H1 (cell line): ENCODE measurements at regions of chr11 and their contacts with region 1.

Region 1: DNA sequence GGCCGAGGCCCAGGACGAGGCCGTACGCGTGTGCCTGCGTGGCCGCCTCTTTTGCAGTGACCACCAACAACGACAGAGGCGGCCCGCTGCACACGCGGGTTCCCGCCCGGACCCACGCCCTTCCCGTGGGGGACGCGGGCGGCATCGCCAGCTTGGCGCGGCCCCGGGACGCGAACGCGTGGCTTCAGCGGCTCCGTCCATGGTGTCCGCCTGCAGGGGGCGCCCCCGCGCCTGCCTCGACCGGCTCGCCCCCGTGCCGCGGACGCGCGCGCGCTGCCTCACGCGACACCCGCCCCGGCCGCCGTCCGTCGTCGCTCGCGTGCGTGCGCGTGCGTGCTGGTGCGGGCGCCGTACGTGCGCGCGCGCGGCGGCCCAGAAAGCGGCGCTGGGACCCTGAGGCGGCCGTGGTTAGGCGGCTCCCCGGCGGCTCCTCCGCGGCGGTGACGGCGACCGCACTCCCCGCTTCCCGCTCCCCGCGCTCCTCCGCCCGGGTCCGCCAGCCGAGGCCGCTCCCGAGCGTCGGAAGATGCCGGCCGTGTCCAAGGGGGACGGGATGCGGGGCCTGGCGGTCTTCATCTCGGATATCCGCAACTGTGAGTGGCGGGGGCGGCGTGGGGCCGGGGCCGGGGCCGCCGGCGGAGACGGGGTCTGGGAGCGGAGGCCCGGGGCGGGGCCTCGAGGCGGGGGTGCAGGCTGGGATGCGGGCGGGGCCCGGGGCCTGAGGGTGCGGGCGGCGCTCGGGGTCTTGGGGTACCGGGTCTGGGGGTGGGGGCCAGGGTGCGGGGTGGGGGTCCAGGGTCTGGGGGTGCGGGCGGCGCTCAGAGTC is at the start of gene AP2A2:
- DNase-seq: peak; percentile 43 to 93
- H3K4me3 ChIP-seq: peak within 1 kb of the TSS; percentile 60 to 81 (median 79)
- H3K27ac ChIP-seq: no peak within 1 kb of the TSS; the same call in 1 of the 2 replicates
- H3K4me1 ChIP-seq: peaks cover 0 to 7% (median 4%) of the 10 kb centered on the region in 4 experiments; a peak in 4 of 7 replicates
- H3K27me3 ChIP-seq: no peaks in the 10 kb centered on the region
- CTCF ChIP-seq: peak; percentile 64 to 90 (median 73)
- EP300 ChIP-seq: 0 out of 3 replicates have a peak, but pooled peaks of 1 of the 2 experiments have one; percentile 45
- POLR2A ChIP-seq: no peak; a peak in 1 of 3 replicates
- RAD21 ChIP-seq: peak in 1 of 2 experiments; percentile 50; a peak in 1 of 4 replicates
- total RNA-seq, gene AP2A2: 50.0 and 56.3 TPM in 2 replicates

Region 2: DNA sequence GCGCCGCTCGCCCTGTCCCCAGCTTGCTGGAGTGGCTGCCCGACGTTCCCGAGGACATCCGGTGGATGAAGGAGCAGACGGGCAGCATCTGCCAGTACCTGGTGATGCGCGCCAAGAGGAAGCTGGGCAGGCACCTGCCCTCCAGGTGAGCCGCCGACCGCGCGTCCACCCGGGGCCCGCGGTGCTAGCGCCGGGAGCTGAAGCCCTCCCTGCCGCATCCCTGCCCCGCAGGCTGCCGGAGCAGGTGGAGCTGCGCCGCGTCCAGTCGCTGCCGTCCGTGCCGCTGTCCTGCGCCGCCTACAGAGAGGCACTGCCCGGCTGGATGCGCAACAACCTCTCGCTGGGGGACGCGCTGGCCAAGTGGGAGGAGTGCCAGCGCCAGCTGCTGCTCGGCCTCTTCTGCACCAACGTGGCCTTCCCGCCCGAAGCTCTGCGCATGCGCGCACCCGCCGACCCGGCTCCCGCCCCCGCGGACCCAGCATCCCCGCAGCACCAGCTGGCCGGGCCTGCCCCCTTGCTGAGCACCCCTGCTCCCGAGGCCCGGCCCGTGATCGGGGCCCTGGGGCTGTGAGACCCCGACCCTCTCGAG is 101.3 kb before region 1 on chr11:
- CTCF ChIA-PET with region 1: no interaction called
- POLR2A ChIA-PET with region 1: no interaction called
- DNase-seq: no peak
- H3K4me3 ChIP-seq: no peak overlapping the region
- H3K27ac ChIP-seq: no peak overlapping the region
- H3K4me1 ChIP-seq: peaks cover 0 to 27% (median 22%) of the 10 kb centered on the region in 4 experiments; a peak in 6 of 7 replicates
- H3K27me3 ChIP-seq: peaks cover 0 to 17% (median 9%) of the 10 kb centered on the region in 4 experiments; a peak in 5 of 7 replicates
- CTCF ChIP-seq: no peak
- EP300 ChIP-seq: no peak
- POLR2A ChIP-seq: no peak
- RAD21 ChIP-seq: no peak

Region 3: DNA sequence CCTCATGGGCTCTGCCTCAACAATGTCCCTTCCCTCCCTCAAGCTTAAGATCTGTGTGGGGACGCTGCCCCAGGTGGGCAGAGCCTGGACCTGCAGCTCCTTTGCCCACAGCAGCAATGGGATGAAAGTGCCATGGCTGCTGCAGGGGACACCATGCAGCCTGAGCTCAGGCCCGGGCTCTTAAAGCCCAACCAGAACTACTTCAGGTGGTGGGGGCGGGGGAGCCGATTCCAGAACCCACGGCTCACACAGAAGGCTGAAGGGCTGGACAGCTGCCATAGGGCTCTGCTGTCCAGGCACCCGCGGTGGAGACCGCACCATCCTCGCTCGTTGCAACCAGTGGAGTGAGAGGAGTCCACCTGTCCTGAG is 27.6 kb before region 1 on chr11:
- CTCF ChIA-PET with region 1: interaction called, 16 read pairs
- POLR2A ChIA-PET with region 1: interaction called, 4 read pairs
- DNase-seq: no peak
- H3K4me3 ChIP-seq: no peak overlapping the region
- H3K27ac ChIP-seq: no peak overlapping the region; the same call in 1 of the 2 replicates
- H3K4me1 ChIP-seq: no peaks in the 10 kb centered on the region; a peak in 2 of 7 replicates
- H3K27me3 ChIP-seq: no peaks in the 10 kb centered on the region
- CTCF ChIP-seq: peak in 2 of 3 experiments; percentile 46 to 75; a peak in 2 of 4 replicates
- EP300 ChIP-seq: no peak
- POLR2A ChIP-seq: no peak
- RAD21 ChIP-seq: peak; percentile 52 to 70; a peak in 3 of 4 replicates

Region 4: GRCh38 chr11:910589-911195 is 15.0 kb before region 1 on chr11 and contains the start of gene CHID1:
- CTCF ChIA-PET with region 1: interaction called, 12 read pairs
- POLR2A ChIA-PET with region 1: interaction called, 7 read pairs
- DNase-seq: peak; percentile 44 to 95
- H3K4me3 ChIP-seq: peak within 1 kb of the TSS; percentile 69 to 97 (median 79)
- H3K27ac ChIP-seq: peak within 1 kb of the TSS; percentile 85; the same call in 1 of the 2 replicates
- H3K4me1 ChIP-seq: peaks cover 0 to 14% (median 6%) of the 10 kb centered on the region in 4 experiments; a peak in 6 of 7 replicates
- H3K27me3 ChIP-seq: no peaks in the 10 kb centered on the region
- CTCF ChIP-seq: peak in 2 of 3 experiments; percentile 5 to 18; a peak in 2 of 4 replicates
- EP300 ChIP-seq: no peak; a peak in 1 of 3 replicates
- POLR2A ChIP-seq: peak in 1 of 2 experiments; percentile 75; a peak in 2 of 3 replicates
- RAD21 ChIP-seq: no peak
- total RNA-seq, gene CHID1: 78.9 and 81.2 TPM in 2 replicates

Region 5: DNA sequence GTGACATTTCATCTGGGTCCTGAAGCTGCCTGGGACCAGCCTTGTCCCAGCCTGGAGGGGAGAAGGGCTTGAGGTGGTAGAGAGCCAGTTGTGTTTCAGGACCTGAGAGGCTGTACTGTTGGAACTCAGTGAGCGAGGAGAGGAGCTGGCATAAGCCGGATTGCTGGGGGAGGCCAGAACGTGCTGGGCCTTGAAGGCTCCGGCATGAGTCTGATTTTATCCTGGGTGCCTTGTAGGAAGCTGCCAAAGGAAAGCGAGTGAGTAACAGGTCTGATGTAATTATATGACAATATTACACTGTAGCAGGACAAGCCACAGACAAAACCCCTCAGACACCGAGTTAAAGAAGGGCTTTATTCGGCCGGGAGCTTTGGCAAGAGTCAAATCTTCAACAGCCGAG is 17.1 kb after region 1 on chr11:
- CTCF ChIA-PET with region 1: interaction called, 48 read pairs
- POLR2A ChIA-PET with region 1: interaction called, 7 read pairs
- DNase-seq: no peak
- H3K4me3 ChIP-seq: no peak overlapping the region
- H3K27ac ChIP-seq: no peak overlapping the region
- H3K4me1 ChIP-seq: peaks cover 25 to 41% (median 33%) of the 10 kb centered on the region in 4 experiments
- H3K27me3 ChIP-seq: no peaks in the 10 kb centered on the region
- CTCF ChIP-seq: no peak
- EP300 ChIP-seq: no peak
- POLR2A ChIP-seq: no peak
- RAD21 ChIP-seq: no peak

Region 6: DNA sequence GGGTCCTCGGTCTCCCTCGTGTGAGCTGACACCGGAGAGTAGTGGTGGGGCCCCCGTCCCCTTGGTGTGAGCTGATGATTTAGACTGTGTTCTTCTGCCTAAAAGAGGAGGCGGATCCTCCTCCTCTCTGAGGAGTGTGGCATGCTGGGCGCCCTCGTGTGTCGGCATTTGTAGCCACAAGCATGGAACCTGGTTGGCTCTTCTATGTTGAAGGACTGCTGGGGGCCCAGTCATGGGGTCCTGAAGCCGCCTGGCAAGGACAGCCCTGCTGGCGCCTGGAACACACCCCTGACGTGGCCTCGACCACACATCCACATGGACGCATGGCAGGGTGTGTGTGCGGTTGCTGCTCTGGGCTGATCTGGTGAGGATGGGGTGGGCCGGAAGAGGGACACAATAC is 50.1 kb after region 1 on chr11:
- CTCF ChIA-PET with region 1: interaction called, 19 read pairs
- POLR2A ChIA-PET with region 1: no interaction called
- DNase-seq: peak; percentile 33 to 69
- H3K4me3 ChIP-seq: no peak overlapping the region
- H3K27ac ChIP-seq: no peak overlapping the region
- H3K4me1 ChIP-seq: peaks cover 0 to 6% (median 0%) of the 10 kb centered on the region in 4 experiments; a peak in 2 of 7 replicates
- H3K27me3 ChIP-seq: no peaks in the 10 kb centered on the region
- CTCF ChIP-seq: peak; percentile 62 to 73 (median 68)
- EP300 ChIP-seq: no peak
- POLR2A ChIP-seq: no peak
- RAD21 ChIP-seq: peak; percentile 59 to 75

Region 7: GRCh38 chr11:1036303-1036923 is 110.7 kb after region 1 on chr11 and contains the start of gene MUC6:
- CTCF ChIA-PET with region 1: interaction called, 10 read pairs
- POLR2A ChIA-PET with region 1: no interaction called
- DNase-seq: no peak
- H3K4me3 ChIP-seq: no peak within 1 kb of the TSS
- H3K27ac ChIP-seq: no peak within 1 kb of the TSS
- H3K4me1 ChIP-seq: peaks cover 0 to 2% (median 0%) of the 10 kb centered on the region in 4 experiments; a peak in 2 of 7 replicates
- H3K27me3 ChIP-seq: no peaks in the 10 kb centered on the region
- CTCF ChIP-seq: no peak
- EP300 ChIP-seq: no peak
- POLR2A ChIP-seq: no peak
- RAD21 ChIP-seq: no peak
- total RNA-seq, gene MUC6: not detected in 2 replicates